Posterior vena cava (tissue), 2 donors: ENCODE measurements at regions of chr2 and their contacts with region 1.

Region 1: DNA sequence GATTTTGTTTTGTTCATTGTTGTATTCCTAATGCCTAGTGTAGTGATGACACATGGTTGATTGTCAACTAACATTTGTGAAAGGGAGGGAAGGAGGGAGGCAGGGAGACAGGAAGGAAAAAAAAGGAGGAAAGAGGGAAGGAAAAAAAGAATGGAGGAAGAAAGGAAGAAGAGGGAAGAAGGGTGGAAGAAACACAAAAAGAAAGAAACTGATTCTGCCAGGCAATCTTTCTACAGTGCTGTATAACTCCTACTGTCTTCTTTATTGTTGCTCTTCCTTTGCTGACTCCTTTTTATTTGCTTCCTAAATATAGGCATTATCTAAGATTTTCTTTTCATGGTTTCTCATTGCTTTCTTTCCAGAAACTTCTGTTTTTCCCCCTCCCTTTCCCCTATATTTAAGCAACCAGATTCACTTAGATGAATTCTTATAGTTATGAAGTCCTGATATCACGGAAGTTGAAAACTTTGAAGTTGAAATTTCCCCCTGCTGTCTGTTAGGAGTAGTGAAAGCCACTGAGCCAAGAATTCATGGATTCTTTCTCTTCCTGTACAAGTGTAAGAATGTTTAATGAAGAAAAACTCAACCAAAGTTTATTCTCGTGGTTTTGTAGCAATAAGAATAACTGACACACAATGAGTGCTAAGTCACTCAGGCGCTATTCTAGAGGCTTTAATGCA is 305.1 kb upstream of the FSHR start:
- DNase-seq: no peak

Region 2: GRCh38 chr2:48545244-48545643 is 914.2 kb before region 1 on chr2:
- intact Hi-C with region 1: loop called in 1 of 2 experiments (anchors 5 kb)
- DNase-seq: no peak